ENCODE measurements at regions of chr7 and their contacts with region 1.

Region 1: DNA sequence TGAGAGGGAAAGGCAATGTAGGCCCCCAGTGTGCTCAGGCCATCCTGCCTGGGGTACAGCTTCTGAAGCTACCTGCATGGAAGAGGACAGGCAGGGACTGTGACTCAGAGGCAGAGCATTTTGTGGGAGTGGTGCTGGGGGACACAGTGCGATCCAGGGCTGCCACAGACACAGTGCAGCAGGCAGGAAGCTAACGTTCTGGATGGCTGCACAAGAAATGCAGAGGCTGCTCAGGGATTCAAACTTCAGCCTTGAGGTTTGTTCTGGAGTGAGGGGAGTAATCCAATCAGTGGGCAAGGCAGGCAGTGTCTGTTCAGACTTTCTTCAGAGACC is 648.0 kb upstream of the IGFBP3 start:
- DNase-seq: peak; percentile 85 to 87
- H3K4me3 ChIP-seq: no peak overlapping the region
- H3K27ac ChIP-seq: 0 out of 2 replicates have a peak overlapping the region, but pooled peaks have one; percentile 5
- H3K4me1 ChIP-seq: peaks cover 30% of the 10 kb centered on the region
- H3K27me3 ChIP-seq: no peaks in the 10 kb centered on the region
- CTCF ChIP-seq: no peak

Region 2: DNA sequence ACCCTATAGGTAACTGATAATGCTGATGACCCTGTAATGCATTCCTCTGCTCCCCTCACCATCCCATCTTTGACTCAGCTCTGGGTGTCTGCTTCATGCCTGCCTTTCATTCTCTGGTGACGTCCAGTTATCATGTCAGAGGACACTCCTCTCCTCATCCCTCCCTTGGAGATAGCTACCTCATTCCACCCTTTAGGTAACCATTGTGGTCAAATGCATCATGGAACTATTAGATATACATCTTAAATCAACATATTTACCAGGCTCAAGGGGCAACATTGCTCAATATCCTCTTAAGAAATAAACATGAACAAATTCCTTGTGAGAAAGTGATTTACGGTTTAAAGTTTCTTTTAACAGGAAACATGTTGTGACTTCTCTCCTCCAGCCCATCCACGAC is 136.4 kb before region 1 on chr7:
- CTCF ChIA-PET with region 1: no interaction called
- POLR2A ChIA-PET with region 1: no interaction called
- intact Hi-C with region 1: loop called (anchors 2 kb)
- DNase-seq: peak; percentile 46 to 94
- H3K4me3 ChIP-seq: no peak overlapping the region
- H3K27ac ChIP-seq: peak overlapping the region; percentile 47
- H3K4me1 ChIP-seq: peaks cover 16% of the 10 kb centered on the region
- H3K27me3 ChIP-seq: no peaks in the 10 kb centered on the region
- CTCF ChIP-seq: no peak

Region 3: DNA sequence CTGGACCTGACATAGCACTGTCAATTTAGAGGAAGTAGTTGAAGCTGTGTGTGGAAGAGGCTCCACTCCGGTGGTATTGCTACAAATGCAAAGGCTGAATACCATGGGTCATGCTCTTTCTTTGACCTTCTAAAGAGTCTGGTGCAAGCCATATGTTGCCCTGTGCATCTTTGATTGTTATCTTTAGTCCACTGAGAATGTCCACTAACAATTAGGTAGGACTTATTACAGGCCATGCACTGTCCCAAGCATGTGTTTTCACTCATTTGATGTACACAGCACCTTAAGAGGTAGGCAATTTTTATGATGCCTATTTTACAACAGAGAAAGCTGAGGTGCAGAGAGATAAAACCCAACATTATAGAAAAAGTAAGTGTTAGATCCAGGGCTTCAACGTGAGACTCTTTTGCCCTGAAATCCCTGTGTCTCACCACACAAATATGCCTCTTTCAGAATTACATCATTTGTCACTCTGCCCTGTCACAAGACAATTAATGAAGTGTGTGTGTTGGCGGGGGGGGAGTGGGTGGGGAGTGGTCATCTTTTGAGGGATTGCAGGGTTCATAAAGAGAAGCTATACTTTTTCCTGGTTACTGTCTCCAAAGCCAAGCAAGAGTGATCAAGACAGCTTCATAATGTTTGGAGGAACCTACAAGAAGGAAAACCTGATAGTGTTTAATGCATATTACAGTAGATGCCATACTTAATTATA is 10.5 kb before region 1 on chr7:
- CTCF ChIA-PET with region 1: interaction called, 5 read pairs
- POLR2A ChIA-PET with region 1: no interaction called
- intact Hi-C with region 1: loop called (anchors 1 kb)
- DNase-seq: peak; percentile 45 to 87
- H3K4me3 ChIP-seq: peak overlapping the region; percentile 21; the same call in 1 of the 2 replicates
- H3K27ac ChIP-seq: peak overlapping the region; percentile 93
- H3K4me1 ChIP-seq: peaks cover 34% of the 10 kb centered on the region
- H3K27me3 ChIP-seq: no peaks in the 10 kb centered on the region
- CTCF ChIP-seq: no peak

Region 4: DNA sequence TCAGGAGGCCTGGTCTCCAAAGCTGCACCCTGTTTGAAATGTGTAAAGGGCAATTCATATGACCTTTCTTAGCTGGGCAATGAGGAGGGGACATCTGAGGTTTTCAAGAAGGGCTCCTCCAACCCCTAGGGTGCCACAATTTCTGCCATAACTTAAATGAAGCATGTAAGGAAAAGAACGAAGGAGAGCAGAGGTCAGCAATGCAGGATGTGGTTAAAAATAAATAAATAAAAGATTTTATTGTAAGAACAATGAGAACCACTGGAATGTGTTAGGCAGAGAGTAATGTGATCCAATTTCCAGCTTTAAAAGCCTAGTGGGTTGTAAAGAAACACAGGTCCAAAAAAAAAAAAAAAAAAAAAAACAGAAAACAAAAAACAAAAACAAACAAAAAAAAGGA is 339.7 kb after region 1 on chr7:
- CTCF ChIA-PET with region 1: no interaction called
- POLR2A ChIA-PET with region 1: no interaction called
- intact Hi-C with region 1: loop called (anchors 5 kb)
- DNase-seq: peak; percentile 53 to 88
- H3K4me3 ChIP-seq: no peak overlapping the region
- H3K27ac ChIP-seq: no peak overlapping the region
- H3K4me1 ChIP-seq: peaks cover 17% of the 10 kb centered on the region
- H3K27me3 ChIP-seq: no peaks in the 10 kb centered on the region
- CTCF ChIP-seq: no peak

Region 5: GRCh38 chr7:47179812-47180515 is 610.9 kb after region 1 on chr7:
- CTCF ChIA-PET with region 1: no interaction called
- POLR2A ChIA-PET with region 1: no interaction called
- intact Hi-C with region 1: loop called (anchors 10 kb)
- DNase-seq: peak; percentile 44 to 75
- H3K4me3 ChIP-seq: no peak overlapping the region
- H3K27ac ChIP-seq: no peak overlapping the region
- H3K4me1 ChIP-seq: no peaks in the 10 kb centered on the region
- H3K27me3 ChIP-seq: peaks cover 8% of the 10 kb centered on the region; the same call in 1 of the 2 replicates
- CTCF ChIP-seq: peak; percentile 97

Measured in PC-9 (cell line).